GM12878 (cell line): ENCODE measurements at regions of chr6 and their contacts with region 1.

Region 1: DNA sequence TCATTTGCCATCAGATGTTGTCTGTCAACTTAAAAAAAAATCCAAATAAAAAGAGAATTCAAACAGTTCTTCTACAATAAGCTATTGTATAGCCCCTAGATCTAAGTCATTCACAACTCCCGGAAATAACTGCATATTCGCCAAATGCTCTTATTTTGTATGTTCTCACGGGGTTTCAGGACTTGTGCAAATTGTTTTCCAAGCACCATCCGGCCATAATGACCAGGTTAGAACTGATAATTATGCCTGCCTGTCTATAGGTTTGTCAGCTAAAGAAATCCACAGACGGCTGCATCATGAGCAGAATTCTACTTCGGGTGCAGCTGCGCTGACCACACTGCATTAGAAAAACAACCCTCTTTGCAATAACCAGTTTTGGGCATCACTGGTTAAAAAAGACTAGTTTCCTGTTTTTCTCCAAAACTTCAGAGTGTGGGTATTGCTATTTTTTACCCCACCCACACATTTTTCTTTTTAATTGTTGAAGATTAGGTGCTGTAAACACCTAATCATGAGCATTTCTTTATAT is 87.7 kb downstream of the HIVEP2 start:
- DNase-seq: no peak
- ATAC-seq: peak; percentile 58
- H3K4me3 ChIP-seq: peak overlapping the region; percentile 59; the same call in 1 of the 2 replicates
- H3K27ac ChIP-seq: peak overlapping the region; percentile 98
- H3K4me1 ChIP-seq: peaks cover 54% of the 10 kb centered on the region
- H3K27me3 ChIP-seq: no peaks in the 10 kb centered on the region
- CTCF ChIP-seq: no peak
- EP300 ChIP-seq: peak in 1 of 2 experiments; percentile 57; a peak in 1 of 4 replicates
- POLR2A ChIP-seq: 0 out of 2 replicates have a peak, but pooled peaks have one; percentile 3
- RAD21 ChIP-seq: no peak

Region 2: DNA sequence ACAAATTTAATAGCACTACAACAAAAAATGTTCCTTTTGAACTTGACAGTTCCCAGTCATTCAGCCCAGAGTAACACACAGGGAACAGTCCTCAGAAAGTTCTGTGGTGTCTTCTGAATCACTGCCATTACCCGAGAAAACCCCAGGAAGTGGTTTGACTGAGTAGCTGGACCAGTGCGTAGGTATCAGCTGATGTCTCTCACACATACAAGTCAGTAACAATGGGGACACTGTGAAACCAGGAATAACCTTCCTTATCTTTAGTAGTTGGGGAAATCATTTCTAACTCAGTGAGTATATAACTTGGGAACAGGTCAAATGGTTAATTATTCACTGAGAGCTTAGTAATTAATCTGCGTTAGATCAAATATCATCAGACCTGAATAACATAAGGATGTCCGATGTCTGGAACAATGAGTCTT is 14.6 kb after region 1 on chr6:
- CTCF ChIA-PET with region 1: interaction called, 9 read pairs
- POLR2A ChIA-PET with region 1: interaction called, 7 read pairs
- RAD21 ChIA-PET with region 1: interaction called, 21 read pairs
- SMC1A ChIA-PET with region 1: interaction called, 213 read pairs
- in situ Hi-C with region 1: no loop called
- intact Hi-C with region 1: no loop called
- DNase-seq: no peak
- ATAC-seq: peak; percentile 88
- H3K4me3 ChIP-seq: no peak overlapping the region
- H3K27ac ChIP-seq: peak overlapping the region; percentile 50
- H3K4me1 ChIP-seq: peaks cover 35% of the 10 kb centered on the region
- H3K27me3 ChIP-seq: no peaks in the 10 kb centered on the region
- CTCF ChIP-seq: no peak
- EP300 ChIP-seq: peak; percentile 81 to 87
- POLR2A ChIP-seq: no peak
- RAD21 ChIP-seq: no peak; the same call in 1 of the 2 replicates

Region 3: GRCh38 chr6:143098054-143098671 is 240.9 kb after region 1 on chr6:
- CTCF ChIA-PET with region 1: no interaction called
- POLR2A ChIA-PET with region 1: no interaction called
- RAD21 ChIA-PET with region 1: no interaction called
- SMC1A ChIA-PET with region 1: no interaction called
- in situ Hi-C with region 1: no loop called
- intact Hi-C with region 1: no loop called
- DNase-seq: peak; percentile 32
- ATAC-seq: peak; percentile 94
- H3K4me3 ChIP-seq: peak overlapping the region; percentile 33; the same call in 1 of the 2 replicates
- H3K27ac ChIP-seq: peak overlapping the region; percentile 33; the same call in 1 of the 2 replicates
- H3K4me1 ChIP-seq: peaks cover 12% of the 10 kb centered on the region
- H3K27me3 ChIP-seq: no peaks in the 10 kb centered on the region
- CTCF ChIP-seq: no peak
- EP300 ChIP-seq: 0 out of 4 replicates have a peak, but pooled peaks of 1 of the 2 experiments have one; percentile 27
- POLR2A ChIP-seq: no peak
- RAD21 ChIP-seq: no peak